ENCODE measurements at regions of chr17 and their contacts with region 1.

Region 1: GRCh38 chr17:59427425-59427921 is 96.0 kb downstream of the YPEL2 start:
- DNase-seq: peak in 4 of 9 experiments; percentile 6 to 40 (median 22)
- ATAC-seq: no peak
- H3K4me3 ChIP-seq: no peak overlapping the region
- H3K4me3 Mint-ChIP-seq: no peak overlapping the region
- H3K27ac ChIP-seq: no peak overlapping the region
- H3K27ac Mint-ChIP-seq: no peak overlapping the region
- H3K4me1 ChIP-seq: peaks cover 6% of the 10 kb centered on the region
- H3K4me1 Mint-ChIP-seq: peaks cover 9% of the 10 kb centered on the region
- H3K27me3 ChIP-seq: no peaks in the 10 kb centered on the region
- H3K27me3 Mint-ChIP-seq: no peaks in the 10 kb centered on the region
- CTCF ChIP-seq: no peak

Region 2: DNA sequence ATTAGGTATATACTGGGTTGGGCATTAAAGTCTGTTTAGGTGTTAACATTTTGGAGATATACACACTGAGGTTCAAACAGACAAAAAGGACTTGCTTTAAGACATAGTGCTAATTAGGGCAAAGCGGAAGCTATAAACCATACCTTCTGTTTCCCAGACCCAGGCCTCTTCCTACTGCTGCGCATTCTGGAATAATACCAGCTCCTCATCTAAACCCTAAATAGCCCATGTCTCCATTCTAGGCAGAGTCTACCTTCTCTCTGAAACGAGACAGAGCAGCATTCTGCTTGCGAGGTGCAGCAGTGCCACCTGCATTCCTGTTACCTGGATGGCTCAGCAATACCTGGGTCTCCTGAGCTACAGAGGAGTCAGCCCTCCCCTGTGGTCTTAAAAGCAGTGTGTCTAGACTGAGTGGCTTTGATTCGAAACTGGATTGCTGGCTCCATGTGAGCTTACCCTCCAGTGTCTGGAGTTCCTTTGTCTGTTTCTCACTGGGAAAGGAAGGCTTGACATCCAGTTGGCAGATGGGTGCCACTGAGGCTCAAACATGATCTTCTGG is 89.7 kb before region 1 on chr17:
- CTCF ChIA-PET with region 1: interaction called, 10 read pairs
- POLR2A ChIA-PET with region 1: interaction called, 5 read pairs
- intact Hi-C with region 1: no loop called
- DNase-seq: no peak
- ATAC-seq: no peak
- H3K4me3 ChIP-seq: no peak overlapping the region
- H3K4me3 Mint-ChIP-seq: no peak overlapping the region
- H3K27ac ChIP-seq: no peak overlapping the region
- H3K27ac Mint-ChIP-seq: no peak overlapping the region
- H3K4me1 ChIP-seq: peaks cover 44% of the 10 kb centered on the region
- H3K4me1 Mint-ChIP-seq: peaks cover 76% of the 10 kb centered on the region
- H3K27me3 ChIP-seq: no peaks in the 10 kb centered on the region
- H3K27me3 Mint-ChIP-seq: no peaks in the 10 kb centered on the region
- CTCF ChIP-seq: no peak

Region 3: DNA sequence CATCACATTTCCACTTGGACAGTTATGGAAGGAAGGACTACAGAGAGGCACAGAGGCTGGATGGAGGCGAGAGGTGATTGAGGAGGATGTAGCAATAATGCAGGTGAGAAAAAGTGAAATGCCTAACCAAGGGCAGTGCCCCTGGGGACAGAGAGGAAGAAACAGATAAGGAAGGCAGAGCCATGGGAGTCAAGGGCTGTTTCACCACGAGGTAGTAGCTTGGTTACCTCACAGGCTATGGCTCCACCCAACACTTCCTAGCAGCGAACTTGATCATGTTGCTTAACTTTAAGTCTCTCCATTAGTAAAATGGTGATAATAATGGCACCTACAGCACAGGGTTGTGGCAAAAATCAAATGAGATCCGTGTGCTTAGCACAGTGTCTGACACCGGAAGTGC is 12.1 kb before region 1 on chr17:
- CTCF ChIA-PET with region 1: interaction called, 30 read pairs
- POLR2A ChIA-PET with region 1: interaction called, 4 read pairs
- intact Hi-C with region 1: no loop called
- DNase-seq: no peak
- ATAC-seq: no peak
- H3K4me3 ChIP-seq: no peak overlapping the region
- H3K4me3 Mint-ChIP-seq: no peak overlapping the region
- H3K27ac ChIP-seq: no peak overlapping the region
- H3K27ac Mint-ChIP-seq: no peak overlapping the region
- H3K4me1 ChIP-seq: peaks cover 17% of the 10 kb centered on the region
- H3K4me1 Mint-ChIP-seq: peaks cover 35% of the 10 kb centered on the region
- H3K27me3 ChIP-seq: no peaks in the 10 kb centered on the region
- H3K27me3 Mint-ChIP-seq: no peaks in the 10 kb centered on the region
- CTCF ChIP-seq: no peak